Common myeloid progenitor, CD34-positive (primary cell): ENCODE measurements at regions of chr22 and their contacts with region 1.

Region 1: DNA sequence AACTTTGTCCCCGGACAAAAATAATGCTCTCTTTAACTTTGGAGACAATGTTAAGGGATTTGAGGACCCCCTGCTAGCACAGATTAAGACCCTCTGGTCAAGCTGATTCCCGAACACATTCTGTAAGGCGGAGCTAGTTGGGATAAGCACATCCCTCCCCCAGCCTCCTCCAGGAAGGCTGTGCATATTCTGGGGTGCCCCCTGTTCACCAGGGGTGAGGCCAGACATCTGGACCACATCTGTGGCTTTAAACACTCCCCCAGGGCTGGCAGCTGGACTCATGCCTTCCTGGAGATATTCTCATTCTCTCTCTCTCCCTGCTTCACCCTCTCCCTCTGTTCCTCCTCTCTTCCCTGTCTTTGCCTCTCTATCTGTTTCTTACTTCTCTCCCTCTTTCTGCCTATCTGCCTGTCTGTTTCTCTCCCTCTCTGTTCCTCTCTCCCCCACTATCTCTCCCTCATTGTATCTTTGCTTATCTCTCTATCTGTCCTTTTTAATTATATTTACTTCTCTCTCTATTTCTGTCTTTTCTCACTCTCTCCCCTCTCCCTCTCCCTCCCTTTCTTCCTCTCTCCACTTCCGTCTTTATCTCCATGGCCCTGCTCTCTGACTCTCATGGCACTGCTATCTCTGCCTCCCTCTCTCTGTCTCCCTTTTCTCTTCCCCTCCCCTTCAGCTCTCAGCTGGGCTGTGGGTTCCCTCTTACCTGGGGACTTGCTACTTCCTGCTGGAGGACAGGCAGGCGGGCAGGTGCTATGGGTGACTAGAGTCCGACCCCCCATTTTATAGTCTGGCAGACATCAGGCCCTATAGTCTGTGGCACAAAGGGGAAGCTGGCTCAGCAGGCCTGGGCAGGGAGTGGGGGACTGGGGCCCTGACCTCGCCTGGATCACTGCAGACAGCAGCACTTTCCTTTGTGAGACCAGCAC is at the start of gene CRYBB1:
- DNase-seq: peak; percentile 11 to 77 (median 62)
- H3K4me3 ChIP-seq: no peak within 1 kb of the TSS
- H3K27ac ChIP-seq: peak within 1 kb of the TSS in 1 of 2 experiments; percentile 52
- H3K4me1 ChIP-seq: peaks cover 4 to 49% (median 37%) of the 10 kb centered on the region in 4 experiments
- H3K27me3 ChIP-seq: no peaks in the 10 kb centered on the region

Region 2: DNA sequence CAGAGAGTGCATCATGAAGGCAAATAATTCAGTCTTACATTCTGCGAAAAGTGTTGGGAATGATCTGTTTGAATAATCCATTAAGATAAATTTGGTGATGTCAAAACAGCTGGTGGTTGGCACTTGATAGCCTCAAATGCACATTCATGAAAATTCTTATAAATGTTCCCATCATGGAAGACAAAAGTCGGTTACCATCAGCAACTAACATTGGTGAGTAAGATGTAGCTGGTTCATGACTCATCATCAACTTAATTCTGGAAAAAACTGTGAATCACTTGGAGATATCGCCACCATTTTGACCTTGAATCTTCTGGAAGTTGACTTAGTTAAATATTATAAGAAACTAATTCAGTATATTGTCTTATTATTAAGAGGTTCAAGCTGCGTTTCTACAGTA is 10.9 kb before region 1 on chr22:
- CTCF ChIA-PET with region 1: interaction called, 10 read pairs
- POLR2A ChIA-PET with region 1: interaction called, 4 read pairs
- DNase-seq: no peak
- H3K4me3 ChIP-seq: no peak overlapping the region
- H3K27ac ChIP-seq: no peak overlapping the region
- H3K4me1 ChIP-seq: no peaks in the 10 kb centered on the region
- H3K27me3 ChIP-seq: no peaks in the 10 kb centered on the region